OCI-LY7 (cell line): ENCODE measurements at regions of chr3 and their contacts with region 1.

Region 1: DNA sequence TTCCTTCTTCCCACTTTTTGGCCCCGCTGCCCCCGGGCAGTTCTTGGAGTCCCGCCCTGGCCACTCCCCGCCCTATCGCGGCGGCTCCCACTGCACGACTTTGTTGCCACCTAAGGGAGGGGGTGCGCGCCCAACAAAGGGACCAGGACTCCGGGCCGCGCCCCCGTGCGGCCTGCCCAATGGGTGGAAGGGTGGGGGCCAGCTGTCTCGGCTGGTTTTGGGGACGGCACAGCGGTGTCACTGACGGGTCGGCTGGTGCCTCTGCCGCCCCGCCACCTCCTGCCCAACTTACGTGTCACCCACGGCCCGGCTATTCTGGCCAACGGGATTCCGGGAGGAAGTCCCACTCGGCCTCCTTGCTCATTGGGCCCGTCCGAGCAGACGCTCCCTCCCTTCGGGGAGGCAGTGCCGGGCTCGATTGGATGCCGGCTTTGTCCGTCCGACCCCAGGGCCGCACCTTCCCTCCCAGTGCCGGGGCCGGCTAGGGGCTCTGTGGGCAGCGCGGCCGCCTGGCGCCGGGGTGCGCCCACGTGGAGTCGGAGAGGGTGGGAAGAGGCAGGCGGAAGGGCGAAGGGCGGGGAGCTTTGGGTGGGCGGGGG is at the start of gene GOLIM4:
- DNase-seq: peak; percentile 96
- H3K4me3 ChIP-seq: peak within 1 kb of the TSS; percentile 80
- H3K27ac ChIP-seq: peak within 1 kb of the TSS; percentile 84
- H3K4me1 ChIP-seq: peaks cover 31% of the 10 kb centered on the region
- CTCF ChIP-seq: peak; percentile 45; the same call in 1 of the 2 replicates
- total RNA-seq, gene GOLIM4: 31.2 and 42.6 TPM in 2 replicates

Region 2: DNA sequence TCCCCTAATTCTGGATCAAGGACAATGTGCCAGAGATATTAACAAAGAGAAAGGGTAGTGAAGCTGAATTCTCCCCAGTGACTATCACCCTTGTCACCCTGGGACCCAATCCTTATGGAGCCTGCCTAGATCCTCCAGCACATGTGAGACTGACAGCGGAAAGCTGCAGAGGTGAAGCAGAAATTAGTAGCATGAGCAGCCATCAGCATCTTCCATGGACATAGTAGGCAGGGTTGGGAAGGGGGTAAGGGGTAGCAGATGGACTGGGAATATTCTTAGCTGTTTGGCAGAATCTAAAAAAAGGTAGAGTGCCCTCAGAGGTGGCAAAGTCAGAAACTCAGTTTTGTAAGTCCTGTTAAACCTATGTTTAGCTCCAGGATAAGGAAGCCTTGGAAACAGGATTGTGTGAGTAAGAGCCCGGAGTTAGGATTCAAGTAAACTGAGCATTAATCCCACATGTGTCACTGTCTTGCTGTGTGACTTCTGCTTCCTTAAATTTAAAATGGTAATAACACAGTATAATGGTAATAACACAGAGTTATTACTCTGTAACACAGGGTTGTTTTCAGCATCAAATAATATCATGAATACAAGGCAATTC is 14.4 kb before region 1 on chr3:
- CTCF ChIA-PET with region 1: interaction called, 3 read pairs
- POLR2A ChIA-PET with region 1: interaction called, 17 read pairs
- intact Hi-C with region 1: no loop called
- DNase-seq: no peak
- H3K4me3 ChIP-seq: peak overlapping the region; percentile 34
- H3K27ac ChIP-seq: peak overlapping the region; percentile 49
- H3K4me1 ChIP-seq: peaks cover 60% of the 10 kb centered on the region
- CTCF ChIP-seq: no peak

Region 3: DNA sequence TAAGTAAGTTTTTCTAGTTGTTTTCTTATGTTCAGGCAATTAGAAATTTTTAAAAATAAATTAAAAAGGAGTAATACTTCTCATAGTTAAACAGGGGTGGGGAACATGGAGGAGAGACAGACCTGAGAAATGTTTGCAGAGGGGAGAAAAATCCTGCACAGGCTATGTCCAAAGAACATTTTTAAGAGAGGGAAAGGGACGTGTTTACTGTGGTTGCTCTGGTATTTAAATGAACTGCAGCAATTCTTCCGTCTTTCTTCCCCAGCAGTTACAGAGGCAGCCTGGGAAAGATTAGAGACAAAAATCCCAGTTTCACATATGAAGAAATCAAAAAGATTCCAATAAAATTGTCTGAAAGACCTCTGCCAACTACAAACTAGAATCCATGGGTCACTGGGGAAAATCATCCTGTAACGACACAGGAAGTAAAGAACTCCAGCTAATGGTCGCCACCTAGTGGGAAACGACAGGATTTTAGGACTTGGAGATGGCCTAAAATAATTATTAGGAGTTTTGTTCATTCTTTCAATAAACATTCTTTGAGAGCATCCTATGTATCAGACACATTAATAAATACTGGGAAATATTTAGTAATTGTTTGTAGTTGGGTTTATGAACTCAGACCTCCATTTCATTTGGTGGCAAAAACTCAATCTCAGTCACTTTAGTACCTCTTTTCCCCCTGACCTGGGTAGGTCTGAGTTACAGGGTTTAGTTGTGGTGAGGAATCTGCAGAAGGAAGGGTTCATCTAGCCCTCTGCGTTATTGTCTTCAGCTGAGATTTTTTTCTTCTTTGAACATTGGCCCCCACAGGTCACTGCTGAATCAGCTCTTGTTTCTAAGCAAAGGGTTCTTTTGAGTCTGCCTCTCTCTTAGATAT is 69.9 kb after region 1 on chr3:
- CTCF ChIA-PET with region 1: interaction called, 6 read pairs
- POLR2A ChIA-PET with region 1: interaction called, 4 read pairs
- intact Hi-C with region 1: loop called (anchors 2 kb)
- DNase-seq: peak; percentile 84
- H3K4me3 ChIP-seq: peak overlapping the region; percentile 26
- H3K27ac ChIP-seq: peak overlapping the region; percentile 4
- H3K4me1 ChIP-seq: peaks cover 27% of the 10 kb centered on the region
- CTCF ChIP-seq: peak; percentile 96

Region 4: DNA sequence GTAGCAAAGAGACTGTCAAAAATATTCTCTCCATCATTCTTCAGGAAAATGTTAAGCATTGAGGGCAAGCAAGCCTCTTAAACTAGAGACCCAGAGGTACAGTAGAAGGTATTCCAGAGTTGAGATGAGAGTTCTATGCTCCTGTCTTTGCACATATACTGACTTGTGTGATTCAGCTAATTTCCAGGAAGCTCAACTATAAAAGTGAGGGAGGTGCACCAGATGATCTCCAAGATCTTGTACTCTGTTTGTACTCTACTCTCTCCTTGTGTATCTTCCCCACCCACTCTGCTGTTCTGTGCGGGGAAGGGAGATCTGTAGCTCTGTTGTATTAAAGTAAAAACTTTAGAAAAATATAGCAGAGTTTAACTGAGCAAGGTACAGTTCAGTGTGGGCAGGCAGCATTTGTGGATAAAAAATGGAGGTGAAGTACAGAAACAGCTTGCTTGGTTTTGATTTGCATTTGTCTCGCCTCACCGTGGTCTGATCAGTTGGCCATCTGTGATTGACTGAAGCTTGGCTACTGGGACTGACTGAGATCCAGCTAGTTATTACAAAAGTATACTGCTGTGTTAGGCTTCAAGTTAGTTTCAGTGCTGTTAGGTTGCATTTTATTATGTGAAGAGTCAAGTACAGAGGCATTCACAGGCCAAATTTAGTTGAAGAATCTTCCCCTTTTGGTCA is 463.2 kb after region 1 on chr3:
- CTCF ChIA-PET with region 1: no interaction called
- POLR2A ChIA-PET with region 1: no interaction called
- intact Hi-C with region 1: no loop called
- DNase-seq: no peak
- H3K4me3 ChIP-seq: no peak overlapping the region
- H3K27ac ChIP-seq: no peak overlapping the region
- H3K4me1 ChIP-seq: no peaks in the 10 kb centered on the region
- CTCF ChIP-seq: no peak